Activated B cell treated with CpG ODN at 0.5 μM for 24 hours (primary cell): ENCODE measurements at regions of chr4 and their contacts with region 1.

Region 1: GRCh38 chr4:184263910-184264732 is 46.4 kb upstream of the ENPP6 start:
- DNase-seq: peak; percentile 80
- ATAC-seq: peak; percentile 20
- H3K4me3 Mint-ChIP-seq: peak overlapping the region; percentile 25
- H3K27ac Mint-ChIP-seq: peak overlapping the region; percentile 60
- H3K4me1 Mint-ChIP-seq: peaks cover 48% of the 10 kb centered on the region
- H3K27me3 Mint-ChIP-seq: no peaks in the 10 kb centered on the region
- CTCF ChIP-seq: peak; percentile 71

Region 2: GRCh38 chr4:184310171-184310567 is 46.0 kb after region 1 on chr4:
- CTCF ChIA-PET with region 1: interaction called, 30 read pairs
- POLR2A ChIA-PET with region 1: interaction called, 47 read pairs
- intact Hi-C with region 1: loop called (anchors 1 kb)
- DNase-seq: no peak
- ATAC-seq: peak; percentile 23
- H3K4me3 Mint-ChIP-seq: no peak overlapping the region
- H3K27ac Mint-ChIP-seq: peak overlapping the region; percentile 51
- H3K4me1 Mint-ChIP-seq: peaks cover 61% of the 10 kb centered on the region
- H3K27me3 Mint-ChIP-seq: no peaks in the 10 kb centered on the region
- CTCF ChIP-seq: no peak

Region 3: DNA sequence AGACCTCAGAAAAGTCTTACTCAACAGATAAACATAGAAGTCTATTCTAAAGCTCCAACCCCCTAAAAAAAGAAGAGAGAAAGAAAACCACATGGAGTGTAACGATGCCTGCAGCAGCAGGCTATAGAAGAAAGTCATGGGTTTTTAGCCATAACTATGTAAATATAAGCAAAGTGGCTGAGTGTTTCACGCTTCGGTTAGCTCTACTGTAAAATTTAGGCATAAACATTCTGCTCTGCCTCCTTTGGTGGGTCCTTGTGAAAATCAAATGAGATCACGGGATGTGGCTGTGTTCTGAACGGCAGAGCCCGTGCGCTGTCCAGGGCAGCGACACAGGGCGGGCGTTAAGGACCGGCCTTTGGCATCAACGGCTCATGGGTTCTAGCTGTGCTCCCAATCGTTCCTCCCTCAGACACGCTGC is 131.9 kb after region 1 on chr4:
- CTCF ChIA-PET with region 1: interaction called, 22 read pairs
- POLR2A ChIA-PET with region 1: interaction called, 18 read pairs
- intact Hi-C with region 1: loop called (anchors 1 kb)
- DNase-seq: no peak
- ATAC-seq: peak; percentile 77
- H3K4me3 Mint-ChIP-seq: peak overlapping the region; percentile 81
- H3K27ac Mint-ChIP-seq: peak overlapping the region; percentile 95
- H3K4me1 Mint-ChIP-seq: peaks cover 46% of the 10 kb centered on the region
- H3K27me3 Mint-ChIP-seq: no peaks in the 10 kb centered on the region
- CTCF ChIP-seq: no peak

Region 4: DNA sequence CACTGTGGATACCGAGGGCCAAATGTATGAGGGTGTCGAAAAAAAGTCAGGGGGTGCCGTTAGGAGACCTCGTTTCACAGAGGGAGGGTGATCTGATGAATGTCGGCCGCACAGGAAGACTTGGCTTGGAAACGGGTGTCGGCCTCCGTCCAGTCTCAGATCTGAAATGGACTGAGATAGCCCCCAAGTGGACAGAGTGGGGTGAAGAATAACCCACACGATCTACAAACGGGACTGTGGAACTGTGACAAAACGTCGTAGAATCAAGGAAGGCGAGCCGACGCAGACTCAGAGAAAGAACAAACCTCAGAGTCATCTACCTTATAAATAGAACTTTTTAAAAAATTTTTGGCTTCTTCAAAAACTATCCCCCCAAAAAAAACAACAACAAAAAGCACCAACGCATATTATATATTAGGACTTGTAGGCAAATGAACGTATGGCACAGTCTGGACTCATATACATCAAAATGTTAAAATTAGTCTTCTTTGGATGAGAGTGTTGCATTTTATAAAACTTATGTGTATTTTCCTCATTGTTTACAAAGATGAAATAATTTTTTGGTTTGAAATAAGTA is 274.0 kb after region 1 on chr4:
- CTCF ChIA-PET with region 1: interaction called, 39 read pairs
- POLR2A ChIA-PET with region 1: interaction called, 79 read pairs
- intact Hi-C with region 1: loop called (anchors 1 kb)
- DNase-seq: peak; percentile 54
- ATAC-seq: peak; percentile 68
- H3K4me3 Mint-ChIP-seq: peak overlapping the region; percentile 96
- H3K27ac Mint-ChIP-seq: peak overlapping the region; percentile 100
- H3K4me1 Mint-ChIP-seq: peaks cover 49% of the 10 kb centered on the region
- H3K27me3 Mint-ChIP-seq: no peaks in the 10 kb centered on the region
- CTCF ChIP-seq: no peak

Region 5: GRCh38 chr4:184815046-184815877 is 551.1 kb after region 1 on chr4:
- CTCF ChIA-PET with region 1: interaction called, 6 read pairs
- POLR2A ChIA-PET with region 1: interaction called, 3 read pairs
- intact Hi-C with region 1: loop called (anchors 5 kb)
- DNase-seq: peak; percentile 33
- ATAC-seq: peak; percentile 68
- H3K4me3 Mint-ChIP-seq: peak overlapping the region; percentile 60
- H3K27ac Mint-ChIP-seq: peak overlapping the region; percentile 87
- H3K4me1 Mint-ChIP-seq: peaks cover 81% of the 10 kb centered on the region
- H3K27me3 Mint-ChIP-seq: no peaks in the 10 kb centered on the region
- CTCF ChIP-seq: no peak

Region 6: GRCh38 chr4:184983672-184984356 is 719.7 kb after region 1 on chr4:
- CTCF ChIA-PET with region 1: interaction called, 10 read pairs
- POLR2A ChIA-PET with region 1: no interaction called
- intact Hi-C with region 1: loop called (anchors 5 kb)
- DNase-seq: peak; percentile 61
- ATAC-seq: peak; percentile 89
- H3K4me3 Mint-ChIP-seq: no peak overlapping the region
- H3K27ac Mint-ChIP-seq: no peak overlapping the region
- H3K4me1 Mint-ChIP-seq: no peaks in the 10 kb centered on the region
- H3K27me3 Mint-ChIP-seq: peaks cover 3% of the 10 kb centered on the region
- CTCF ChIP-seq: no peak